ENCODE measurements at regions of chr1 and their contacts with region 1.

Region 1: DNA sequence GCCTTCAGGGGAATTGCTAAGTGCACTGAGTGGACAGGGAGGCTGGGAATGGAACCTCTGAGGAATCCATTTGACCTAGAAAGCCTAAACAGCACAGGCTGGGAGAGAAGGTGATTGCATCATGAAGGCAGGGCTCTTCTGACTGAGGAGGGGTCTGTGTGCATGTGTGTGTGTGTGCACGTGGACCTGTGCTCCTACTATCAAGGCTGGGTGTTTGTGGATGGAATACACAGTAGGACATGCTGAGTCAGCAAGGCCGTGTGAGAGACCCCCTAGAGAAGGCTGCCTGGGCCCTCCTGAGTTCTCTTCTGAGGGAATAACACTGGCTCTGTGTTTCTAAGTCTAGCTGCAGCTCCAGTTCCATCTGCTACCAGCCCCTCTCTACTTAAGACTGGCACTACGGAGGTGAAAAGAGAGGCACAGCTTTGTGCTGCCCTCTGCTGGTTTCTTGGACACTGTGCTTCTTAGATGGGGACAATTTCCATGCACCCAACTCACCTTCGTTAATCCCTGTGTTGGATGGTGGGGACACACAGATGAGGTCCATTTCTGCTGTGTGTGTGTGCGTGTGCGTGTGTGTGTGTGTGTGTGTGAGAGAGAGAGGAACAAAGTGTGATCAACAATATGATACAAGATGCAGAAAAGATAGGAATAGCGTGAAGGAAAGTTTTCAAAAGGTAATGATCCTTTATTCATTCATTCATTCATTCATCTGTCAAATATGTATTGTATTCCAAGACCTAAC is 6.2 kb upstream of the EFCAB14 start:
- DNase-seq: peak; percentile 79
- H3K4me3 Mint-ChIP-seq: no peak overlapping the region
- H3K27ac Mint-ChIP-seq: no peak overlapping the region
- H3K4me1 Mint-ChIP-seq: no peaks in the 10 kb centered on the region
- H3K27me3 Mint-ChIP-seq: peaks cover 31% of the 10 kb centered on the region

Region 2: GRCh38 chr1:46477153-46477929 is 247.8 kb before region 1 on chr1:
- CTCF ChIA-PET with region 1: interaction called, 6 read pairs
- POLR2A ChIA-PET with region 1: no interaction called
- intact Hi-C with region 1: loop called (anchors 10 kb)
- DNase-seq: peak; percentile 88
- H3K4me3 Mint-ChIP-seq: no peak overlapping the region
- H3K27ac Mint-ChIP-seq: no peak overlapping the region
- H3K4me1 Mint-ChIP-seq: no peaks in the 10 kb centered on the region
- H3K27me3 Mint-ChIP-seq: peaks cover 24% of the 10 kb centered on the region

Region 3: DNA sequence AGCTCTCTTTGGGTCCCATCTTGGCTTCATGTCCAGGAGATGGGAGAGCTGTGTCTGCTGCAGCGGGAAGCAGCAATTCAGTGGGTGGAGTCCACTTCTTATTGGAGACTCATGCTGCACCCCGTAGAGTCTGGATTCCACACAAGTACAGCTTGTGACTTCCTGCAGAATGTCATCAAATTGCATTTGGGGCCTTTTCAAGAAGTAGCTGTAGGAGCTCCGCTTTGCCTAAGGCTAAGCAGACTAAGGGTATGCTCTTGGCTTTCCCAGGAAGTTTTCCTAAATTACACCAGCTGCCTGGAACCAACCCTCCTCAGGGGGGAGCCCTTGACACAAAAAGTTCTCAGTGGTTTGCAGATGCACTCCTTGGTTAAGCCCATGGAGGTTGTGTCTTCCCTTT is 102.8 kb before region 1 on chr1:
- CTCF ChIA-PET with region 1: interaction called, 11 read pairs
- POLR2A ChIA-PET with region 1: no interaction called
- intact Hi-C with region 1: loop called (anchors 1 kb)
- DNase-seq: peak; percentile 33
- H3K4me3 Mint-ChIP-seq: no peak overlapping the region
- H3K27ac Mint-ChIP-seq: no peak overlapping the region
- H3K4me1 Mint-ChIP-seq: peaks cover 9% of the 10 kb centered on the region
- H3K27me3 Mint-ChIP-seq: no peaks in the 10 kb centered on the region

Region 4: DNA sequence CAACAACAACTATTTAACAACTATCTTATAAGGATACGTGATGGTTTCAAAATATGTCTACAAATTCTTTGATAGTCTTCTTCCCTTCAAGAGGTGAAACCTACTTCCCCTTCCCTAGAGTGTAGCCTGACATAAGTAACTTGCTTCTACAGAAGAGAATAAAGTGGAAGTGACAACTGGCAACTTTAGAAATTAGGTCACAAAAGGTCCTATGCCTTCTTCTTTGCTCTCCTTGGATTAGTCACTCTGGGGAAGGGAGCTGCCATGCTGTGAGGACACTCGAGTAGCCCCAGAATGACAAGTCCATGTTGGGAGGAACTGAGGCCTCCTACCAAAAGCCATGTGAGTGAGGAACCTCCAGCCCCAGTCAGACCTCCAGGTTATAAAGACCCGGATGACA is 25.5 kb before region 1 on chr1:
- CTCF ChIA-PET with region 1: interaction called, 10 read pairs
- POLR2A ChIA-PET with region 1: no interaction called
- intact Hi-C with region 1: no loop called
- DNase-seq: no peak
- H3K4me3 Mint-ChIP-seq: no peak overlapping the region
- H3K27ac Mint-ChIP-seq: no peak overlapping the region
- H3K4me1 Mint-ChIP-seq: peaks cover 28% of the 10 kb centered on the region
- H3K27me3 Mint-ChIP-seq: no peaks in the 10 kb centered on the region

Region 5: DNA sequence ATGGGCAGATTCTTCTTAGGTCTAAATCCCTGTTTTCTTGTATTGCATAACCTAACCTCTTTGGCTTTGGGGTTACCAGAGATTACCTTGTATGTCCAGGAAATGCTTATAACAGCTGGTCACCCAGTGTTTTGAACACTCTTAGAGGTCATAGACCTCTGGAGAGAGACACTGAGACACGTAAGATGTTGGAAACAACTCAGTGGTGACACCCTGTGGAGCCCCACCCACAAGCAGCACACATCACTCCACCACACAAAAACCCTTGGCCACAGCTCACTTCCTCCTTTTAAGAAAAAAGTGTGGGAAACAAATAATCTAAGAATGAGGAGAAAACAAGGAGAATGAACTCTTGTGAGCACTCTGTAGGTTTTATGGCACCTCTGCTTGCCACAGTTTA is 47.4 kb after region 1 on chr1:
- CTCF ChIA-PET with region 1: no interaction called
- POLR2A ChIA-PET with region 1: no interaction called
- intact Hi-C with region 1: no loop called
- DNase-seq: no peak
- H3K4me3 Mint-ChIP-seq: no peak overlapping the region
- H3K27ac Mint-ChIP-seq: no peak overlapping the region
- H3K4me1 Mint-ChIP-seq: no peaks in the 10 kb centered on the region
- H3K27me3 Mint-ChIP-seq: peaks cover 11% of the 10 kb centered on the region

Region 6: GRCh38 chr1:46862348-46862747 is 137.2 kb after region 1 on chr1:
- CTCF ChIA-PET with region 1: no interaction called
- POLR2A ChIA-PET with region 1: no interaction called
- intact Hi-C with region 1: no loop called
- DNase-seq: no peak
- H3K4me3 Mint-ChIP-seq: no peak overlapping the region
- H3K27ac Mint-ChIP-seq: no peak overlapping the region
- H3K4me1 Mint-ChIP-seq: peaks cover 8% of the 10 kb centered on the region
- H3K27me3 Mint-ChIP-seq: peaks cover 13% of the 10 kb centered on the region